ENCODE measurements at regions of chr2 and their contacts with region 1.

Region 1: DNA sequence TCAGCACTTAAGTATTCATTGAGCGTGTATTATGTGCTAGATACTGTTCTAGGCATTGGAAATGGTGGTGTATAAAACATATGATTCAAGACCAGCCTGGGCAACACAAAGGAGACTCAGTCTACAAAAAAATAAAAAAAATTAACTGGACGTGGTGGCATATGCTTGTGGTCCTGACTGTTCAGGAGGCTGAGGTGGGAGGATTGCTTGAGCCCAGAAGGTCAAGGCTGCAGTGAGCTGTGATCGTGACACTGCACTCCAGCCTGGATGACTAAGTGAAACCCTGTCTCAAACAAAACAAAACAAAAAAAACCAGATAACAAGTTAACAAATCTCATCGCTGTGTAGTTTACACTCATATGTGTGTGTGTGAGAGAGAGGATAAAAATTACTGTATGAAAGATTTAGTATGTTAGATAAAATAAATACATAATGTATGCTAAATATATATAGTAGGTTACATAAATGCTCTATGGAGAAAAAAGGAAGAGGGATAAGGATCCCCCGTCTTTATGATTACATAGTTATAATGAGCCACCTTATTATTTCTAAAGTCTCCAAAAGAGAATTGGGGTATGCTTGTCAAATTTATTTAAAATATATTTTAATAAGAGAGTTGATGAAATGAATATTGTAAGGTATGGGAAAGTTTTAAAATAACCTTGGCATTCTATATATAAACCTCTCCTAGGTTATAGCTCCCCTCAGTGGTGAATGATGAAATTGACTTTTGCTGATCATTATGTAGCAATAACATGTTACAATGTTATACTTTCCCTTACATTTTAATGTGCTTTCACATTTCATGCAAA is 69.2 kb downstream of the EHBP1 start:
- DNase-seq: no peak
- ATAC-seq: peak; percentile 51
- H3K4me3 Mint-ChIP-seq: no peak overlapping the region
- H3K27ac Mint-ChIP-seq: no peak overlapping the region
- H3K4me1 Mint-ChIP-seq: no peaks in the 10 kb centered on the region
- H3K27me3 Mint-ChIP-seq: no peaks in the 10 kb centered on the region

Region 2: GRCh38 chr2:62456721-62457539 is 317.8 kb before region 1 on chr2:
- CTCF ChIA-PET with region 1: interaction called, 83 read pairs
- POLR2A ChIA-PET with region 1: no interaction called
- DNase-seq: peak; percentile 61
- ATAC-seq: peak; percentile 95
- H3K4me3 Mint-ChIP-seq: peak overlapping the region; percentile 52
- H3K27ac Mint-ChIP-seq: no peak overlapping the region
- H3K4me1 Mint-ChIP-seq: peaks cover 2% of the 10 kb centered on the region
- H3K27me3 Mint-ChIP-seq: peaks cover 6% of the 10 kb centered on the region

Region 3: GRCh38 chr2:62747169-62747568 is 27.6 kb before region 1 on chr2:
- CTCF ChIA-PET with region 1: no interaction called
- POLR2A ChIA-PET with region 1: no interaction called
- DNase-seq: no peak
- ATAC-seq: no peak
- H3K4me3 Mint-ChIP-seq: no peak overlapping the region
- H3K27ac Mint-ChIP-seq: no peak overlapping the region
- H3K4me1 Mint-ChIP-seq: no peaks in the 10 kb centered on the region
- H3K27me3 Mint-ChIP-seq: no peaks in the 10 kb centered on the region